ENCODE measurements at regions of chr11 and their contacts with region 1.

Region 1: GRCh38 chr11:66408488-66409214 is 12.2 kb upstream of the NPAS4 start:
- DNase-seq: peak; percentile 86 to 92 (median 89)
- H3K4me3 ChIP-seq: peak overlapping the region in 1 of 2 donors; percentile 70
- H3K4me3 Mint-ChIP-seq: peak overlapping the region; percentile 76 to 91 (median 80)
- H3K27ac ChIP-seq: no peak overlapping the region
- H3K27ac Mint-ChIP-seq: peak overlapping the region in 5 of 7 donors; percentile 36 to 89 (median 80)
- H3K4me1 ChIP-seq: peaks cover 5% of the 10 kb centered on the region
- H3K4me1 Mint-ChIP-seq: peaks cover 3 to 5% (median 4%) of the 10 kb centered on the region in 4 donors
- H3K27me3 ChIP-seq: no peaks in the 10 kb centered on the region
- H3K27me3 Mint-ChIP-seq: peaks cover 0 to 33% of the 10 kb centered on the region in 2 donors

Region 2: DNA sequence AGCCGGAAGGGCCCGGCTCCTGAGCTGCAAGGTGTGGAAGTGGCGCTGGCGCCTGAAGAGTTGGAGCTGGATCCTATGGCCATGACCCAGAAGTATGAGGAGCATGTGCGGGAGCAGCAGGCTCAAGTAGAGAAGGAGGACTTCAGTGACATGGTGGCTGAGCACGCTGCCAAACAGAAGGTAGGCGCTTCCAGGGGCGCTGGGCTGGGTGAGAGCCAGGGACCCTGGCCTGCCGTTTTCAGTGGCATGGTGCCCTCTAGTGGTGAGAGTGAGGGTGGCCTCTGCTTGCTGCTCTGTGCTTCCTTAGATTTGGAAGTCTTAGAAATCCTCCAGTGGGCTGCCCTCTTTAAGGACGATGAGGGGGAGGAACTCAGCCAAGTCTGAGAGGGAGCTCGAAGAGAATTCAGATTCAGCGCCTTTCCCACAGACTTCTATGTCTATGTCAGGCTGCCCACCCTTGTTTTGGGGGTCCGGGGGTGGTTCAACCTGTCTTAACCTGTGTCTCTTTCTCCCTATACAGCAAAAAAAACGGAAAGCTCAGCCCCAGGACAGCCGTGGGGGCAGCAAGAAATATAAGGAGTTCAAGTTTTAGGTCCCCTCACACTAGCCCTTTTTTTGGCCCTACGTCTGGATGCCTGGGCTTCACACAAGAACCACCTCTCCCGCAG is 340.4 kb before region 1 on chr11:
- CTCF ChIA-PET with region 1: no interaction called
- POLR2A ChIA-PET with region 1: no interaction called
- intact Hi-C with region 1: no loop called
- DNase-seq: peak; percentile 71 to 76 (median 72)
- H3K4me3 ChIP-seq: no peak overlapping the region
- H3K4me3 Mint-ChIP-seq: peak overlapping the region; percentile 52 to 96 (median 76)
- H3K27ac ChIP-seq: peak overlapping the region; percentile 77
- H3K27ac Mint-ChIP-seq: peak overlapping the region; percentile 92 to 99 (median 93)
- H3K4me1 ChIP-seq: peaks cover 48% of the 10 kb centered on the region
- H3K4me1 Mint-ChIP-seq: peaks cover 39 to 67% (median 51%) of the 10 kb centered on the region in 4 donors
- H3K27me3 ChIP-seq: no peaks in the 10 kb centered on the region
- H3K27me3 Mint-ChIP-seq: no peaks in the 10 kb centered on the region

Region 3: GRCh38 chr11:66429983-66430602 is 21.4 kb after region 1 on chr11:
- CTCF ChIA-PET with region 1: interaction called, 26 read pairs
- POLR2A ChIA-PET with region 1: no interaction called
- intact Hi-C with region 1: loop called (anchors 1 kb)
- DNase-seq: peak; percentile 57 to 62 (median 58)
- H3K4me3 ChIP-seq: no peak overlapping the region
- H3K4me3 Mint-ChIP-seq: no peak overlapping the region
- H3K27ac ChIP-seq: no peak overlapping the region
- H3K27ac Mint-ChIP-seq: peak overlapping the region in 1 of 7 donors; percentile 64
- H3K4me1 ChIP-seq: no peaks in the 10 kb centered on the region
- H3K4me1 Mint-ChIP-seq: peaks cover 0 to 7% (median 1%) of the 10 kb centered on the region in 4 donors
- H3K27me3 ChIP-seq: no peaks in the 10 kb centered on the region
- H3K27me3 Mint-ChIP-seq: no peaks in the 10 kb centered on the region

Region 4: DNA sequence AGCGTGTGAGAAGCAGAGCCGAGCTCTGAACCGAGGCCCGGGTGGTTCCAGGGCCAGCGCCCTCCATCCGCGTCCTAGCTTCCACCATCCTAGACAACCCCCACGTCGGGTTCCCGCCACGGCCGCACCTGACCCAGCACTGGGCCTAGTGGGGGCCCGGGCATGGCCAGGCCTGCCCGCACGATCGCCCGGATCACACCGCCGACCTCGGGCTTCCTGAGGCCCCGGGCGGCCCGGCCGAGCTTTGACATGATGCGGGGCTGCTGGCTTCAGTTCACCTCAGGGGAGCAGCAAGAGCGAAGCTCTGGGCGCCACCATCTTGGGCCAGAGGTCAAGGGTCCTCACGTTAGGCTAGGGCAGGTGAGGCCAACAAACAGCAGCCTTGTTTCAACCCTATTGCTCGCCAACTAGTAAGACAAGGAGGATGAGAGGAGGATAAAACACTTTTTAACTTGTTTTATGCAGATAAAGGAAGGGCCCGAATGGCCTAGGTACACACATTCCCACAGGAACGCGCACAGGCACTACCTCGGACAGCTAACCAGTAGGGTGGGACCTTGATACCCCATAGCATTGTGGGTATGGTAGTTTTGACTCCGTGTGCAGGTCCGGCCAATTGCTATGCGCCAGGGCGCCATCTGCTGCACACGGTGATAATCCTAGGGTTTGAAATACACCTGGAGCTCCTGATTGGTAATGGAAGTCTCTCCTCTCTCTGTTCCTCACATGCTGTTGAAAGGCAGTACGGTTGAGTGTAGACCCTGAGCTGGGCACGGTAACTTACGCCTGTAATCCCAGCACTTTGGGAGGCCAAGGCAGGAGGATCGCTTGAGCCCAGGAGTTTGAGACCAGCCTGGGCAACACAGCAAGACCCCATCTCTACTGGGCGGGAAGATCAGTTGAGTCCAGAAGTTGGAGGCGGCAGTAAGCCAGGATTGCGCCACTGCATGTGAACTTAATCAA is 30.1 kb after region 1 on chr11 and contains the start of gene MRPL11:
- CTCF ChIA-PET with region 1: interaction called, 11 read pairs
- POLR2A ChIA-PET with region 1: interaction called, 9 read pairs
- intact Hi-C with region 1: loop called (anchors 2 kb)
- DNase-seq: peak; percentile 89 to 92 (median 91)
- H3K4me3 ChIP-seq: peak within 1 kb of the TSS; percentile 67 to 88
- H3K4me3 Mint-ChIP-seq: peak within 1 kb of the TSS; percentile 87 to 94 (median 91)
- H3K27ac ChIP-seq: peak within 1 kb of the TSS; percentile 69
- H3K27ac Mint-ChIP-seq: peak within 1 kb of the TSS; percentile 88 to 100 (median 98)
- H3K4me1 ChIP-seq: peaks cover 7% of the 10 kb centered on the region
- H3K4me1 Mint-ChIP-seq: peaks cover 6 to 17% (median 11%) of the 10 kb centered on the region in 4 donors
- H3K27me3 ChIP-seq: no peaks in the 10 kb centered on the region
- H3K27me3 Mint-ChIP-seq: peaks cover 2 to 3% of the 10 kb centered on the region in 2 donors
- total RNA-seq, gene MRPL11: 22.0 to 27.9 TPM

Region 5: GRCh38 chr11:66480117-66480938 is 71.7 kb after region 1 on chr11 and contains the start of gene DPP3:
- CTCF ChIA-PET with region 1: interaction called, 18 read pairs
- POLR2A ChIA-PET with region 1: interaction called, 8 read pairs
- intact Hi-C with region 1: loop called (anchors 1 kb)
- DNase-seq: peak; percentile 94 to 96 (median 96)
- H3K4me3 ChIP-seq: peak within 1 kb of the TSS; percentile 88 to 90
- H3K4me3 Mint-ChIP-seq: peak within 1 kb of the TSS; percentile 87 to 96 (median 90)
- H3K27ac ChIP-seq: peak within 1 kb of the TSS; percentile 81
- H3K27ac Mint-ChIP-seq: peak within 1 kb of the TSS; percentile 78 to 94 (median 91)
- H3K4me1 ChIP-seq: peaks cover 20% of the 10 kb centered on the region
- H3K4me1 Mint-ChIP-seq: peaks cover 13 to 48% (median 21%) of the 10 kb centered on the region in 4 donors
- H3K27me3 ChIP-seq: no peaks in the 10 kb centered on the region
- H3K27me3 Mint-ChIP-seq: no peaks in the 10 kb centered on the region
- total RNA-seq, gene DPP3: 21.0 to 24.0 TPM

Region 6: DNA sequence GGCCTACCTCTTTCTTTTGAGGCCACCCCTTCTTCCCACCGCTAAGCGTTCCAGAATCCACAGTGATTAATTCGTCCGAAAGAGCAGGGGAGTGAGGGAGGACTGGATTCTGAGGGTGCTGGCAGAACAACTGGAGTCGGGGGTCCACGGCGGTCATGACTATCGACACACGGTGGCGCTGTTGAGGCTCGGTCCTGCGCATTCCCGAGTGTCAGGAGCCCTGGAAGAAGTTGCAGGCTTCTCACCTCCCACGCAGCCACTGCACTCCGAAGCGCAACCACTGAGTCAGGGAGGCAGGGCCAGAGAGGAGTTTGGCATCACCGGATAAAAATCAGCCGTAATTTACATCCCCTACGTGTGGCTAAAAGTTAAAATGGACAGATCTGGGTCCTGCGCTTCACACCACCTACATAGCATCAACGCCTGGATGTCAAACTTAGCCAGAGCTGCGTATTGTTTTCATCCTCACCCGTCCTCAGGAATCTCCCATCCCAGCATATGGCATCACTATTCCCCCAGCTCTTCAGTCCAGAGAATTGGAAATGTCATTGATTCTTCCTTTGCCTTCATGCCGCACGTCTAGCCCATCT is 170.5 kb after region 1 on chr11:
- CTCF ChIA-PET with region 1: interaction called, 3 read pairs
- POLR2A ChIA-PET with region 1: no interaction called
- intact Hi-C with region 1: loop called (anchors 1 kb)
- DNase-seq: peak; percentile 64 to 72 (median 68)
- H3K4me3 ChIP-seq: no peak overlapping the region
- H3K4me3 Mint-ChIP-seq: peak overlapping the region in 2 of 8 donors; percentile 33 to 47
- H3K27ac ChIP-seq: no peak overlapping the region
- H3K27ac Mint-ChIP-seq: peak overlapping the region in 3 of 7 donors; percentile 9 to 68 (median 25)
- H3K4me1 ChIP-seq: peaks cover 5% of the 10 kb centered on the region
- H3K4me1 Mint-ChIP-seq: peaks cover 0 to 12% (median 6%) of the 10 kb centered on the region in 4 donors
- H3K27me3 ChIP-seq: no peaks in the 10 kb centered on the region
- H3K27me3 Mint-ChIP-seq: peaks cover 0 to 7% of the 10 kb centered on the region in 2 donors

Region 7: GRCh38 chr11:66835768-66836405 is 427.2 kb after region 1 on chr11:
- CTCF ChIA-PET with region 1: interaction called, 5 read pairs
- POLR2A ChIA-PET with region 1: no interaction called
- intact Hi-C with region 1: loop called (anchors 10 kb)
- DNase-seq: no peak
- H3K4me3 ChIP-seq: no peak overlapping the region
- H3K4me3 Mint-ChIP-seq: no peak overlapping the region
- H3K27ac ChIP-seq: no peak overlapping the region
- H3K27ac Mint-ChIP-seq: peak overlapping the region in 4 of 7 donors; percentile 21 to 73 (median 38)
- H3K4me1 ChIP-seq: peaks cover 21% of the 10 kb centered on the region
- H3K4me1 Mint-ChIP-seq: peaks cover 18 to 32% (median 27%) of the 10 kb centered on the region in 4 donors
- H3K27me3 ChIP-seq: no peaks in the 10 kb centered on the region
- H3K27me3 Mint-ChIP-seq: no peaks in the 10 kb centered on the region